AG04450 (cell line): ENCODE measurements at regions of chr11 and their contacts with region 1.

Region 1: DNA sequence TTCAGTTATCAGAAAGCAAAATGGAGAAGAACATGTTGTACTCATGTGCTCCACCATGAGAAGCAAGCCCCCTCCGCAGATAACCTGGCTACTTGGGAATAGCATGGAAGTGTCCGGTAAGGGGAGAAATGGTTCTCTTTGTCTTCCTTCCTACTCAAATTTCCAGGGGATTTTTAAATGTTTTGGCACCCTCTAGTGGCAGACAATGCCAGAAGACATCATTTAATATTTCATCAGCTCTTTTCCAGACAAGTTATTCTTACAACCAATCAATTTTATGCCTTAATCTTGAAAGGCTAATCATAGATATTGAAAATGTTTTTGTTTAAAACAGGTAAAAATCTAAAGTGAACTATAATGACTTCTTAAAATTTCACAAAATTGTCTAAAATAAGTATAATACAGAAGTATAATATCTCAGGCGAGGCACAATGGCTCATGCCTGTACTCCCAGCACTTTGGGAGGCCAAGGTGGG is 15.7 kb downstream of the CRTAM start:
- DNase-seq: peak; percentile 59
- H3K4me3 ChIP-seq: no peak overlapping the region
- H3K27ac ChIP-seq: no peak overlapping the region
- H3K27me3 ChIP-seq: no peaks in the 10 kb centered on the region
- CTCF ChIP-seq: peak; percentile 69

Region 2: DNA sequence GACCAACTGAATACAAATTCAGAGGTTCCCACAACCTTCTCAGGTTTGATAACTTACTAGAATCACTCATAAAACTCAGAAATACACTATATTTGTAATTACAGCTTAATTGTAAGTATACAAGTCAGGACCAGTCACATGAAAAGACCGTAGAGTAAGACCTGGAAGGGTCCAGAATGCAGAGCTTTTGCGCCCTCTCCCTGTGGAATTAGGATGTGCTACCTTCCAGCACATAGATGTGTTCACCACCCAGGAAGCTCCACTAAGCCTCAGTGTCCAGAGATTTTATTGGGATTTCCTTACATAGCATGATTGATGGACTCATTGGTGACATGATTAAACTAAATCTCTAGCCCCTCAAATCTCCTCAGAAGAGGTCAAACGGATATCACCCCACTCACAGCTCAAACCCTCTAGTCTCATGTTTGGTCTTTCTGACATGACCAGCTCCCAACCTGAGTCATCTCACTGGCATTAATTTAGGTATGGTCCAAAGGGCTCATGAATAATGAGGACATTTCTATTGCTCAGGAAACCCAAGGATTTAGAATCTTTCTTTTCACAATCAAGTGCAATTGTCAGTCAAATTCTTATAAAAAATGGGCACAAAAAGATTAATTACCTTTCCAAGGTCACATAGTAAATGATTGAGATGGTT is 275.7 kb before region 1 on chr11:
- CTCF ChIA-PET with region 1: interaction called, 57 read pairs
- POLR2A ChIA-PET with region 1: no interaction called
- DNase-seq: no peak
- H3K4me3 ChIP-seq: no peak overlapping the region
- H3K27ac ChIP-seq: no peak overlapping the region
- H3K27me3 ChIP-seq: no peaks in the 10 kb centered on the region
- CTCF ChIP-seq: peak; percentile 9; the same call in 1 of the 2 replicates

Region 3: GRCh38 chr11:122796128-122796717 is 57.8 kb before region 1 on chr11:
- CTCF ChIA-PET with region 1: interaction called, 23 read pairs
- POLR2A ChIA-PET with region 1: interaction called, 4 read pairs
- DNase-seq: no peak
- H3K4me3 ChIP-seq: no peak overlapping the region
- H3K27ac ChIP-seq: no peak overlapping the region
- H3K27me3 ChIP-seq: no peaks in the 10 kb centered on the region
- CTCF ChIP-seq: peak; percentile 79

Region 4: DNA sequence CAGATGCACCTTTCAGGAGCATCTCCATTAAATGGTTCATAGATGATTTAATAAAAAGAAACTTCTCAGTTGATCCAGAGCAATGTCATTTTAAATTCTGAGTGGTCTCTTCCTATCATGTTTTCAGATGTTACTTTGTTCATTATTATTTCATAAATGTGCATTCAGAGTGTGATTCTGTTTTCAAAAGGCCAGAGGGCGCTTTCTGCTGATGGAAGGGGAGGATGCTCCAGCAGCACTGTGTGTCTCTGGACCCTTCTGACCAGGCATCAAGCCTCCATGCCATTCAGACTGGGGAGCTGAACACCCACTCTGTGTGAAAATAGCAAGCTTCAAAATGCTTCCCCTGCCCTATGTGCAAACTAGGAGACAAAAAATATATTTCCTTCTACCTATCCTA is 39.6 kb before region 1 on chr11:
- CTCF ChIA-PET with region 1: interaction called, 15 read pairs
- POLR2A ChIA-PET with region 1: no interaction called
- DNase-seq: no peak
- H3K4me3 ChIP-seq: no peak overlapping the region
- H3K27ac ChIP-seq: no peak overlapping the region
- H3K27me3 ChIP-seq: no peaks in the 10 kb centered on the region
- CTCF ChIP-seq: peak; percentile 17; the same call in 1 of the 2 replicates

Region 5: DNA sequence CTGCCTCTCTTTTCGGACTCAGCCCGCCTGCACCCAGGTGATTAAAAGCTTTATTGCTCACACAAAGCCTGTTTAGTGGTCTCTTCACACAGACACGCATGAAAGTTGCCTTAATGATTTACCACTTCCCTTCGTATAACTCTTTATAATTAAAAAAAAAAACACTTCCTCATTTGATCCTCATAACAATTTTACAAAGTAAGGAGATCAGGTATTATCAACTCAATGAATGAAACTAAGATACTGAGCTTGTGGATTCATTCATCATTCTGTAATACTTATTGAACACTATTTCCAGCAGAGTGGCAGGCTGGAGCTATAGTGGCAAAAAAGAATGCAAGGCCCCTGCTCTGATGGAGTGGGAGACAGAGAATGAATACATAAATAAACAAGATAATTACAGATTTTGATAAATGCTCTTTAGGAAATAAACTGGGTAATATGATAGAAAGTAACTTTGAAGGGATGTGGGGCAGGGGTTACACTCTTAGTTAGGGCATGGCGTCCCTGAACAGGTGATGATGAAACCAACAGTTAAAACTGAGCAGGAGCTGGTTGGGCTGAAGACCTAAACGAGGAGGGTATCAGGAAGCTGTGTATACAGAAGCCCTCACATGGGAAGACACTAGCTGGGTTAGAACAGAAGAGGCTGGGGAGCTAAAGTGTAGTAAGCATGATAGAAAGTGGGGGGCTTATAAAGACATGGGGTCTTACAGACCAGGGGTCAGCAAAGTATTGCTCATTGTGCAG is 21.1 kb before region 1 on chr11:
- CTCF ChIA-PET with region 1: interaction called, 10 read pairs
- POLR2A ChIA-PET with region 1: no interaction called
- DNase-seq: no peak
- H3K4me3 ChIP-seq: no peak overlapping the region
- H3K27ac ChIP-seq: no peak overlapping the region
- H3K27me3 ChIP-seq: no peaks in the 10 kb centered on the region
- CTCF ChIP-seq: no peak

Region 6: DNA sequence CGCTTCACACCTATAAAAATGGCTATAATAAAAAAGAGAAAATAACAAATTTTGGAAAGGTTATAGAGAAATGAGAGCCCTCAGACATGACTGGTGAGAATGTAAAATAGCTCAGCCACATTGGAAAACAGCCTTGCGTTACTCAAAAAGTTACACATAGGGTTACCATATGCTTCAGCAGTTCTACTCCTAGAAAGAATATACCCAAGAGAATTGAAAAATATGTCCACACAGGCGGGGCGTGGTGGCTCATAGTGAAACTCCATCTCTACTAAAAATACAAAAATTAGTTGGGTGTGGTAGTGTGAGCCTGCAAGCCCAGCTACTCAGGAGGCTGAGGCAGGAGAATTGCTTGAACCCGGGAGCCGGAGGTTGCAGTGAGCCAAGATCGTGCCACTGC is 21.0 kb after region 1 on chr11:
- CTCF ChIA-PET with region 1: interaction called, 13 read pairs
- POLR2A ChIA-PET with region 1: no interaction called
- DNase-seq: no peak
- H3K4me3 ChIP-seq: no peak overlapping the region
- H3K27ac ChIP-seq: no peak overlapping the region
- H3K27me3 ChIP-seq: peaks cover 16% of the 10 kb centered on the region
- CTCF ChIP-seq: no peak

Region 7: GRCh38 chr11:123083623-123084029 is 229.6 kb after region 1 on chr11:
- CTCF ChIA-PET with region 1: no interaction called
- POLR2A ChIA-PET with region 1: no interaction called
- DNase-seq: peak; percentile 90
- H3K4me3 ChIP-seq: no peak overlapping the region
- H3K27ac ChIP-seq: peak overlapping the region; percentile 71
- H3K27me3 ChIP-seq: no peaks in the 10 kb centered on the region
- CTCF ChIP-seq: no peak